ENCODE measurements at regions of chr19 and their contacts with region 1.

Region 1: GRCh38 chr19:56538254-56538760 is 441 bp upstream of the ZFP28 start:
- DNase-seq: peak; percentile 96
- ATAC-seq: peak; percentile 89
- H3K4me3 ChIP-seq: peak overlapping the region; percentile 39 to 84 (median 69)
- H3K4me3 Mint-ChIP-seq: peak overlapping the region; percentile 93
- H3K27ac ChIP-seq: peak overlapping the region; percentile 80 to 83
- H3K27ac Mint-ChIP-seq: peak overlapping the region; percentile 99
- H3K4me1 ChIP-seq: peaks cover 6 to 17% of the 10 kb centered on the region in 2 donors
- H3K4me1 Mint-ChIP-seq: peaks cover 19% of the 10 kb centered on the region
- H3K27me3 ChIP-seq: no peaks in the 10 kb centered on the region
- H3K27me3 Mint-ChIP-seq: no peaks in the 10 kb centered on the region
- CTCF ChIP-seq: no peak

Region 2: DNA sequence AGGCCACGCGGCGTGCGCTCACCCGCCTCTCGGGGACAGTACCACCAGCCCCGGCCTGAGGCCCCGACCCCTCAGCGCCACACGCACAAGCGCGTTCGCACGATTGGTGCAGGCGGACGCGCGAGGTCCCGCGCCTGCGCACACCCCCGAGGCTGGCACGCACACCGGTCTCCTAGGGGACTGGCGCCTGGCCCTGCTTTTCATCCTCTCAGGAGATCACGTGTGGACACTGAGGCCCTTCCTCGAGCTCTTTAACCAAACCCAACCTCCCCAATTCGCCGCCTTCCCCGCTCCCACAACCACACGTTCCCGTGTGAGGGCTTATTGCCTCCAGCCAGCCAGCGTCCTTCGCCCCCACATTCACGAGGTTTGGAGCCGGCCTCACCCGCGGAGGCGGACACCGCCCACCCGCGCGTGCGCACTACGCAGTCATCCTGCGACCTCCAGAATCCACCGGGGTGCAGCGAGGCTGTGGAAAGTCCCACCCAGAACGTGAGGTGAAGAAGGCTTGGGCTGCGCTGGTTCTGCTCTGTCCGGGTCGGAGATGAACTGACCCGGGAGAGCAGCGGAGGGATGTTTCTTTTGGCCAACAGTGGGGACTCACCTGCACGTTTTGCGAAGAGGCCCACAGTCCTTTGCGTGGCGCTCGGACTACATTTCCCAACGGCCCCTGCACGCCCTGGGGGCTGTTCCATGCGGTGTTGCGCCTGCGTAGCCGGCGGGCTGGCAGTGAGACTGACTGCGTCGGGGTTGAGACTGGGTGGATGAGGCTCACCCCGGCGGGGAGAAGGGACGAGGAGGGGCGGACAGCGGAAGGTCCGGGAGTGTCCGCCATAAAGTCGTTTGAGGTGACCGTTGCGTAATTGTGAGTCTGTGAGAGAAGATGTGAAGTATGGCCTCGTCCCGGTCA is 60.6 kb before region 1 on chr19:
- CTCF ChIA-PET with region 1: no interaction called
- POLR2A ChIA-PET with region 1: no interaction called
- intact Hi-C with region 1: no loop called
- DNase-seq: peak; percentile 93
- ATAC-seq: peak; percentile 80
- H3K4me3 ChIP-seq: peak overlapping the region; percentile 69 to 76 (median 70)
- H3K4me3 Mint-ChIP-seq: peak overlapping the region; percentile 99
- H3K27ac ChIP-seq: peak overlapping the region; percentile 87 to 94
- H3K27ac Mint-ChIP-seq: peak overlapping the region; percentile 94
- H3K4me1 ChIP-seq: peaks cover 11 to 20% of the 10 kb centered on the region in 2 donors
- H3K4me1 Mint-ChIP-seq: peaks cover 18% of the 10 kb centered on the region
- H3K27me3 ChIP-seq: no peaks in the 10 kb centered on the region
- H3K27me3 Mint-ChIP-seq: peaks cover 19% of the 10 kb centered on the region
- CTCF ChIP-seq: no peak

Region 3: DNA sequence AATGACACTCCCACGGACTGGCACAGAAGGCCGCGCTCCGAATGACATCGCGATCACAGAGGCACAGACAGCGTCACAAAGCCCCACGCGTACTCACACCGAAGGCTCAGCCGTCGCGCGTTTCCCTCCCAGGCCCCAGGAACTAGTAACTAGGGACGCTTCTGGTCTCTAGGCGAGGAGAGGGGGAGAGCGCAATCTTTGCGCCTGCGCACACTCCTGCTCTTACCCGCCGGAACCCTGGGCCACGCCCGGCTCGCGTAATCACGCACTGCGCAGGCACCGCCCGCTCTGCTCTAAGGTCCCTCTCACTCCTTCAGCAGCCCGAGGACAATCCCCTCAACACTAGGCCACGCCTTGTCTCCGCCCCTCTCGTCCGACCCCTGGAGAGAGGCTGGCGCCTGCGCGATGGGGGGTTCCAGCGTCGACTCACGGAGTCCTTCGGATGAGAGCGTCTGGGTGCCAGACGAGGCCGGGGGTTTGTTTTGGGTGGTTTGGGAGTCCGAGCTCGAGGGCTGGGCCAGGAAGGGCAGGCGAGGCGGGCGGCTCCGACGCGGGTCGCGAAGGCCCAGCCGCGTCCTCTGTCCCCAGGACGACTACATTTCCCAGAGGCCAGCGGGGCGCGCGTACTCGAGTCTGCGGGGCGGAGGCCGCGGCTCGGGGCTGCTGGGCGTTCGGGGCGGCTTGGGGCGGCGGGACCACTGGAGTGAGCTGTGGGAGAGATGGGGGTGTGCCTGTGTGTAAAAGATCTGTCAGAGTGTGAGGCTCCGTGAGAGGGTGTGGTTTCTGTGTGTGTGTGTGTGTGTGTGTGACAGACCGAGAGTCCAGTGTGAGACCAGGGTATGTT is 30.6 kb before region 1 on chr19 and contains the start of gene ZNF471:
- CTCF ChIA-PET with region 1: no interaction called
- POLR2A ChIA-PET with region 1: interaction called, 4 read pairs
- intact Hi-C with region 1: loop called (anchors 1 kb)
- DNase-seq: peak; percentile 95
- ATAC-seq: peak; percentile 99
- H3K4me3 ChIP-seq: peak within 1 kb of the TSS; percentile 55 to 77 (median 67)
- H3K4me3 Mint-ChIP-seq: no peak within 1 kb of the TSS
- H3K27ac ChIP-seq: peak within 1 kb of the TSS; percentile 89 to 97
- H3K27ac Mint-ChIP-seq: no peak within 1 kb of the TSS
- H3K4me1 ChIP-seq: peaks cover 10 to 13% of the 10 kb centered on the region in 2 donors
- H3K4me1 Mint-ChIP-seq: peaks cover 9% of the 10 kb centered on the region
- H3K27me3 ChIP-seq: no peaks in the 10 kb centered on the region
- H3K27me3 Mint-ChIP-seq: no peaks in the 10 kb centered on the region
- CTCF ChIP-seq: no peak
- total RNA-seq, gene ZNF471: 4.7 and 5.9 TPM in 2 replicates

Region 4: GRCh38 chr19:56577719-56578602 is 39.7 kb after region 1 on chr19:
- CTCF ChIA-PET with region 1: no interaction called
- POLR2A ChIA-PET with region 1: no interaction called
- intact Hi-C with region 1: no loop called
- DNase-seq: no peak
- ATAC-seq: no peak
- H3K4me3 ChIP-seq: peak overlapping the region in 1 of 5 experiments; percentile 13
- H3K4me3 Mint-ChIP-seq: no peak overlapping the region
- H3K27ac ChIP-seq: no peak overlapping the region
- H3K27ac Mint-ChIP-seq: no peak overlapping the region
- H3K4me1 ChIP-seq: no peaks in the 10 kb centered on the region
- H3K4me1 Mint-ChIP-seq: no peaks in the 10 kb centered on the region
- H3K27me3 ChIP-seq: no peaks in the 10 kb centered on the region
- H3K27me3 Mint-ChIP-seq: no peaks in the 10 kb centered on the region
- CTCF ChIP-seq: no peak

Region 5: DNA sequence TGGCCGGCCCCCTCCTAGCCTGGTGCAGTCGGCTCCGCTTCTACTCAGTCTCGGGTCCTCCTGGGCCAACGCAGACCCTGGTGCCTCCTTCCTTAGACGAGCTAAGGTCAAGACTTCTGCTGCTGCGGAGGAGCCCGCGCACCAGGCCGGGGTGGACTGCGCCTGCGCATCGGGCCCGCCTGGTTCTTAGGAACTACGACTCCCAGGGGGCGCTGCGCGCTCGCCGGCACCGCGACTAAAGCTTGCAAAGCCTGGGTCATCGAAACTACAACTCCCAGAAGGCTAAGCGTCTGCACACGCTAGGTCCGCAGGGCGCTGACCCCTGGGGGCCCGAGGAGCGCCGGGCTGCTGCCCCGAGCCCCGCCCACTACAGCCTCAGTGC is 133.3 kb after region 1 on chr19 and contains the start of gene ZNF835:
- CTCF ChIA-PET with region 1: no interaction called
- POLR2A ChIA-PET with region 1: no interaction called
- intact Hi-C with region 1: loop called (anchors 1 kb)
- DNase-seq: peak; percentile 92
- ATAC-seq: peak; percentile 98
- H3K4me3 ChIP-seq: peak within 1 kb of the TSS; percentile 27 to 83 (median 72)
- H3K4me3 Mint-ChIP-seq: peak within 1 kb of the TSS; percentile 98
- H3K27ac ChIP-seq: no peak within 1 kb of the TSS
- H3K27ac Mint-ChIP-seq: peak within 1 kb of the TSS; percentile 89
- H3K4me1 ChIP-seq: peaks cover 9 to 18% of the 10 kb centered on the region in 2 donors
- H3K4me1 Mint-ChIP-seq: peaks cover 14% of the 10 kb centered on the region
- H3K27me3 ChIP-seq: no peaks in the 10 kb centered on the region
- H3K27me3 Mint-ChIP-seq: no peaks in the 10 kb centered on the region
- CTCF ChIP-seq: peak; percentile 33
- total RNA-seq, gene ZNF835: 7.0 and 10.1 TPM in 2 replicates

Measured in B cell (primary cell).